Adrenal gland (tissue), 19 donors: ENCODE measurements at regions of chr2 and their contacts with region 1.

Region 1: GRCh38 chr2:31239593-31240177 is 5.7 kb downstream of the EHD3 start:
- DNase-seq: peak in 4 of 7 donors; percentile 26 to 67 (median 28)
- H3K4me3 ChIP-seq: no peak overlapping the region
- H3K27ac ChIP-seq: peak overlapping the region in 3 of 5 donors; percentile 13 to 81 (median 71)
- H3K4me1 ChIP-seq: peaks cover 0 to 5% of the 10 kb centered on the region in 2 donors
- H3K27me3 ChIP-seq: no peaks in the 10 kb centered on the region
- CTCF ChIP-seq: no peak
- POLR2A ChIP-seq: no peak

Region 2: DNA sequence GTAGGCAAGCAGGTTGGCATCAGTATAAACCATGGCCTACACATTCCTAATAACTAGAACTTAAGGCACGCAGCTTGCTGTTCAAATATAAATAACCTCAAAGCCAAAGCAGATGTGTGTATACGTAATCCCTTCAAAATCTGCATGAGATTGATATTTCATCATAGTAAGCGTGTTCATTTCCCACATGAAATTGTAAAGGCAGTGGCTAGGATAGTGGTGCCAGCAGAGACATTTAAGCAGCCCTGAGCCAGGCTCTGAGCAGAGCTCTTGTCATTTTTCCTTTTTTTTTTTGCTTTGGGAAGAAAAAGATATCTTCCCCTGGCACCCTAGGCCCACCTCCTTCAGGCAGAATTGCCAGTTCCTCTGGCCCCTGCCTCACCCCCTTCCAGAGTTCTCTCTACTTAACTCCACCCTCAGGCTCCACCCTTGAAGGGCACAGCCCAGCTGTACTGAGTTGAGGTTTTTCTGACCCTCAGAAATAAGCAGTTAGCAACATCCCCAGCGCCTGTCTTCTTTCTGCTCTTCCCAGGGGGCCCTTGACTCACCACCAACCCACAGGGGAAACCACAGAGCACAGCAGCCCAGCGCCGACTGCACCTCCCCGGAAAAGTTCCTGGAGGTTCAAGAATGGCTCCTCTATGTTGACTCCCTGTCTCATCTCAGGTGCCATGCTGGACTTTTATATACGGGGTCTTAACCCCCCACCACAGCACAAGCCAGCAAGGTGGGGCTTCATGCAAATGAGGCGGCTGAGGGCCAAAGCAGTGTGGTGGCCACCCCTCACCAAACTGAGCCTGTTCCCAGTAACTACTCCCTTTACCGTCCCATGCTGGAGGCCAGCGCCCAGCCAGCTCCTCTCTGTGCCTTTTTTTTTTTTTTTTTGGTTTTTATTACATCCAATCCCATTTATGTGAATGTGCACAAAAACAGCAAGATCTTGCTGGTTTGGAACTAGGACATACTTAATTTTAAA is 79.0 kb after region 1 on chr2:
- intact Hi-C with region 1: loop called in 1 of 2 experiments (anchors 10 kb)
- DNase-seq: peak in 3 of 7 donors; percentile 13 to 38 (median 23)
- H3K4me3 ChIP-seq: no peak overlapping the region
- H3K27ac ChIP-seq: peak overlapping the region in 2 of 5 donors; percentile 64 to 79
- H3K4me1 ChIP-seq: peaks cover 4 to 25% of the 10 kb centered on the region in 2 donors
- H3K27me3 ChIP-seq: no peaks in the 10 kb centered on the region
- CTCF ChIP-seq: no peak
- POLR2A ChIP-seq: no peak